Activated CD4-positive, alpha-beta memory T cell treated with anti-CD3 and anti-CD28 coated beads, Interleukin-2, amount 10 ng/mL, durations not matched to agents 7 days and 5 days (primary cell): ENCODE measurements at regions of chr17 and their contacts with region 1.

Region 1: DNA sequence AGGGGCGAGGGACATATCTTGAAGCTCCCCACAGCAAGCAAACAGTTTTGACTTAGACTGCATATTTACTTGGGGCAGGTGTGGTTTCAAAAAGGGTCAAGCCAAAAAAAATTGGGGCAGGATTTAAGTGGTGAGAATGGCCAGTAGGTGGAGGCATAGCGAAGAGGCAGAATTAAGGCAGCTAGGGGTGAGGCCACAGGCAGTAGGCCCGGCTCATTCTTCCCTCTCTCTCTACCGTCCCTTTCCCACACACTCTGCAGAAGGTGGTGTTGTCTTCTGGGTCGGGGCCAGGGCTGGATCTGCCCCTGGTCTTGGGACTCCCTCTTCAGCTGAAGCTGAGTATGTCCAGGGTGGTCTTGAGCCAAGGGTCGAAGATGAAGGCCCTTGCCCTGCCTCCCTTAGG is 2.6 kb downstream of the SHBG start:
- DNase-seq: peak; percentile 47
- H3K4me3 Mint-ChIP-seq: no peak overlapping the region
- H3K27ac Mint-ChIP-seq: no peak overlapping the region
- H3K4me1 Mint-ChIP-seq: peaks cover 5% of the 10 kb centered on the region
- H3K27me3 Mint-ChIP-seq: no peaks in the 10 kb centered on the region

Region 2: DNA sequence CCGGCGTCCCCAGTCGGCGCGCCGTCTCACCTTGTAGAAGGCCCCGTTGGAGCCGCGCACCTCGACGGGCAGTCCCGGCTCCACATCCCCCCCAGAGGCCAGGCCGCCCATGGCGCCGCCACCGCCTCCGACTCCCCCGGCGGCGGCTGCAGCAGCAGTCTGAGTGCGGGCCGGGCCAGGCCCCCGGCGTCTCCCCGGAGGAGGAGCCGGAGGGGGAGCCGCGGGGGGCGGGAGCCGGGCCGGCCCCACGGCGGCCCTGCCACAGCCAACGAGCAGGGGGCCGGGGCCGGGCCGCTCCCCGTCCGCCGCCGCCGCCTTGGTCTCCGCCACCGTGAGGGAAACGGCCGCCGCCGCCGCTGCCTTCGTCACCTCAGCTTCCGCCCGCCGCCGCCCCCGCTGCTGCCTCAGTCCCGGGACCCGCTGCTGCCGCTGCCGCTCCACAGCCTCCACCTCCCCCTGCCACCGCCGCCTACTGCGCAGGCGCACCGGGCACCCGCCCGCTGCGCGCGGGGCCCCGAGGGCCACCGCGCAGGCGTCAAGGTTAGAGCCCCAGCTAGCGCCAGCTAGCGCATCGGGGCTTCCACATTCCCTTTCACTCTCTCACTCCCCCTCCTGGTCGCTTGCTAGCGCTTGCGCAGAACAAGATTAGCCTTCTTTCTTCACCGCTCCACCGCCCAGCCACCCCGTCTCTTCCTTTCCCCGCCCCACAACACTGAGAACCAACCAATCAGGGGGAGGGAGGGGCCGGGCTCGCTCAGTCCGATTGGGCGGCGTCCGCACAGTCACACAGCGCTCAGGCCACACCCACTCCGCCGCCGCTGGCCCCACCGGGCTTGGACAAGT is 17.9 kb before region 1 on chr17 and contains the start of gene FXR2:
- CTCF ChIA-PET with region 1: interaction called, 14 read pairs
- POLR2A ChIA-PET with region 1: interaction called, 10 read pairs
- DNase-seq: peak; percentile 99
- H3K4me3 Mint-ChIP-seq: peak within 1 kb of the TSS; percentile 89
- H3K27ac Mint-ChIP-seq: peak within 1 kb of the TSS; percentile 82
- H3K4me1 Mint-ChIP-seq: peaks cover 27% of the 10 kb centered on the region
- H3K27me3 Mint-ChIP-seq: no peaks in the 10 kb centered on the region
- total RNA-seq, gene FXR2: 30.4 to 31.2 TPM

Region 3: GRCh38 chr17:7644775-7645174 is 12.3 kb after region 1 on chr17:
- CTCF ChIA-PET with region 1: interaction called, 13 read pairs
- POLR2A ChIA-PET with region 1: interaction called, 3 read pairs
- DNase-seq: peak; percentile 37
- H3K4me3 Mint-ChIP-seq: no peak overlapping the region
- H3K27ac Mint-ChIP-seq: no peak overlapping the region
- H3K4me1 Mint-ChIP-seq: peaks cover 27% of the 10 kb centered on the region
- H3K27me3 Mint-ChIP-seq: peaks cover 11% of the 10 kb centered on the region